ENCODE measurements at regions of chr6 and their contacts with region 1.

Region 1: DNA sequence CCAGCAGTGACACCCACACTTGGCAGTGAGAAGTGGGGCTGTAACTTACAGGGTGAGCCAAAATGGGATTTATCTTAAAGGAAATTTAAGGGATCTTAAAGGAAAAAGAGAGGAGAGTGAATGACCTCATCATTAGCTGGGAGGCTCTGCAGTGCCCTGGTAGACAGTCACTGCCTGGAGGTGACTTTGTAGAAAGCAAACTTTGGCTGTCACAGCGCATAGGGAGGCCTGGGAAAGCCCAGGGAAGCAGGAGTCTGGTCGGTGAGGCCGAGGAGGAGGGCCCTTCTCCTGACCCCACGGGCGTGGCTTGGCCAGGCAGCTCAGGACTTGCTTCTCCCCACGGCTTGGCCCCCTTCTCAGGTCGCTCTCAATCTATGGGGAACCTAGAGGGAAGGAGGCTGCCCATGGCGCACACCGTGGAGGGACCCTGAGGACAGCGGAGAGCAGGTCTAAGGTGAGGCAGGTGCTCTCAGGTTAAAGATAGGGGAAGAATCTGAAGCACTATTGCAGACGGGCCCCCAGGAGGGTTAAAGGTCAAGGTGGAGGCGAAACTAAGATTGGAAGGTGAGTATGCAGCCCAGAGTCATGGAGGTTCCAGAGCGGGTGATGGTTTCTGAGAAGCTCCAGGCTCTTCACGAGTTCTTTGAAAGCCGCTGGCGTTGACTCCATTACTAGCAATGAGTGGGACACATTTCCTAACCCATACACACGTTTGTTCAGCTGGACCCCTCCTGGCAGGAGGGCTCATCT is 15.6 kb upstream of the RIPK1 start:
- DNase-seq: no peak
- H3K4me3 ChIP-seq: no peak overlapping the region
- H3K27ac ChIP-seq: no peak overlapping the region
- H3K4me1 ChIP-seq: no peaks in the 10 kb centered on the region
- H3K27me3 ChIP-seq: no peaks in the 10 kb centered on the region
- CTCF ChIP-seq: no peak
- POLR2A ChIP-seq: no peak

Region 2: GRCh38 chr6:2841264-2842138 is 211.2 kb before region 1 on chr6 and contains the start of gene SERPINB1:
- intact Hi-C with region 1: loop called (anchors 10 kb)
- DNase-seq: peak; percentile 63
- H3K4me3 ChIP-seq: peak within 1 kb of the TSS; percentile 36 to 41
- H3K27ac ChIP-seq: peak within 1 kb of the TSS; percentile 82 to 85
- H3K4me1 ChIP-seq: peaks cover 7% of the 10 kb centered on the region
- H3K27me3 ChIP-seq: no peaks in the 10 kb centered on the region
- CTCF ChIP-seq: no peak
- POLR2A ChIP-seq: peak; percentile 60
- total RNA-seq, gene SERPINB1: 27.5 to 31.1 TPM

Region 3: DNA sequence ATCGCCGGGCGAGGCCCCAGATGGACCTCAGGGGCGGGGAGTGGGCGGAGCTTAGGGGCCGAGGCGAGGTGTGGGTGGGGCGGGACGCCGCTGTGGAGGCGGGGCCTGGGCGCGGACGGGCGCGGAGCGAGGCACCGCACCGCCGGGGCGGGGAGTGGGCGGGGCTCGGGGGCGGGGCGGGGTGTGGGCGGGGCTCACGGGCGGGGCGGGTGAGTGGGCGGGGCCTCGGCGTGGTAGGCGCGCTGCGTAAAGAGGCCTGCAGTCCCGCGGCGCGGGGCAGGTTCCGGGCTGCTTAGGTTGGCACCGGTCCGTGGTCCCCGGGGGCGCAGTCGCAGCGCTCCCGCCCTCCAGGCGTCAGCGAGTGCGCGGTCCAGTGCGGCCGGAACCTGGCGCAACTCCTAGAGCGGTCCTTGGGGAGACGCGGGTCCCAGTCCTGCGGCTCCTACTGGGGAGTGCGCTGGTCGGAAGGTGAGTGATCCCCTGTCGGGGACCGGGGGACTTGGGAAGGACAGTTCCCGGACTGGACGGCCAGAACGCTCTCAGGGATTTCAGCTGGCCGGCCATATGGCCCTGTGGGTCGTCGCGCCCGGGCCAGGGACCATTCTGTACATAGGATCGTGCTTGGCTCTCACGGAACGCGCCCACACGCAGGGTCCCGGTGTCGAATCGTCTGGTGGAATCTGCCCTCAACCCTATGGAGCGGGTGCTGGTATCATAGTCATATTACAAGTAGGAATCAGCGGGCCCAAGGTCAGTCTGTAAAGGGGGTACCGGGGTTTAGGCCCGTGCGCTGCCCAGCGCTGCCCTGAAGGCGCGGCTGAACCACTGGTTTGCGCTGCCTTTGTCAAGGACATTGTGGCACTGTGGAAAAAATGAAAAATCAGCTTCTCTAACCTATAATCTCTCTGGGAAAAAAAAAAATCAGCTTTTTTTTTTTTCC is 52.8 kb before region 1 on chr6 and contains the start of gene NQO2:
- intact Hi-C with region 1: loop called (anchors 2 kb)
- DNase-seq: peak; percentile 91
- H3K4me3 ChIP-seq: peak within 1 kb of the TSS; percentile 68 to 86
- H3K27ac ChIP-seq: peak within 1 kb of the TSS; percentile 83 to 89
- H3K4me1 ChIP-seq: peaks cover 4% of the 10 kb centered on the region
- H3K27me3 ChIP-seq: no peaks in the 10 kb centered on the region
- CTCF ChIP-seq: peak in 2 of 4 experiments; percentile 39
- POLR2A ChIP-seq: peak; percentile 90
- total RNA-seq, gene NQO2: 27.9 to 34.3 TPM